ENCODE measurements at regions of chr2 and their contacts with region 1.

Region 1: DNA sequence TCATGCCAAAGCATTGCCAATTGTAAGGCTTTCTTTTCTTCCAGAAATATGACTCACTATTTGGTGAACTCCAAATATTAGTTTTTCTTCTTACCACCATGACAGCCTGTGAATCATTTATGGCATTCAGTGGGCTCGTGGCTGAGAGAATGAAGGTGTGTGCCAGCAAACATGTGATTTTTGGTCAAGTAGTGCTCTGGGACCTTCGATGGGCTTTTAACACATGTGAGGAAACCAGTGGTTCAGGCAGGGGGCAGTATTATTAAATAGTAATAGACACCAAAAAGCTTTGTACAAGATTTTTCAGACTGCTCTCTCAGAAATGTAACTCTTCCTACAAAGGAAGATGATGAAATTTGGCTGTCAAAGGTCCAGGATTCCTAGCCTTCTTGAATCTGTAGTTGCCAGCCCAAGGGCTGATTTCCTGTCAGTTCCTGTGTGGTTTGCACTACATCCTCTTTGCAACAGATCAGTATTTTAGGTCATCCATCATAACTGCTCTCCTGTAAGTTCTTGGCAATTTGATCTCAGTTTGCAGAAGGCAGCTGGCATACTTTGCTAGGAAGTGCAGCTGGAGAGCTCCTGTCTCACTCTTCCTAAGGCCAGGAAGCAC is 64.3 kb downstream of the BABAM2 start:
- DNase-seq: peak in 4 of 5 donors; percentile 47 to 55 (median 50)
- ATAC-seq: peak; percentile 79 to 90 (median 84)
- H3K4me3 ChIP-seq: no peak overlapping the region
- H3K27ac ChIP-seq: peak overlapping the region; percentile 12 to 90 (median 58)
- H3K4me1 ChIP-seq: peaks cover 3 to 83% (median 38%) of the 10 kb centered on the region in 12 donors
- H3K27me3 ChIP-seq: no peaks in the 10 kb centered on the region
- CTCF ChIP-seq: peak in 10 of 12 donors; percentile 15 to 54 (median 46)
- POLR2A ChIP-seq: no peak

Region 2: DNA sequence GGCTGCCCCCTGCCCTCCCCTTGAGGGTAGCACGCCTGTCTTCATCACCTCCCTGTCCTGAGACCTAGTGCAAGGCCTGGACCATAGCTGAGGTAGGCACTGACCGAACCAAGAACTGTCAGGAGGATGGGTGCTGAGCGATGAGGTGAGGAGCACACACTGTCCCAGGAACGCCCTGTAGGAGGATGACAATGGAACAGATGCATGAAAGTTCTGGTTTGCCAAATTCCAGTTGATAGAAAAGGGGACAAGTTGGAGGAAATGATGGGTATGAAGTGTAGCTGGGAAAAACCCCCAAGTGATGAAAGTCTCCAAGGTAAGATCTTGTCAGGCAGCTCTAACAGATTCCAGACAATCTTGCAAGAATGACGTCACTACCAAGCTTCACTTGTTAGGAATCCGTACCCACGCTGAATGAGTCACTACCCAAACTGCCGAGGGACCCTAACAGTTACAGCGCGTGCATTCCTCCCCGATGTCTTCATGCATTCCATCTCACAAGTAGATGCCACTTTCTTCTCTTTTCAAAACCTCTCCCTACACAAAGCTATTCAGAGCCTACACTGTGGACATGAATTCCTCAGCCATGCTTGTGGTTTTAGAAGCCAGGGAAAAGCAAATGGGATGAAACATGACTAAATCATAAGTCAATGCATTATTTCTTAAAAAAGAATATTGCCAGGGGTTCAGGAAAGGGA is 155.8 kb before region 1 on chr2:
- intact Hi-C with region 1: no loop called
- DNase-seq: peak in 4 of 5 donors; percentile 38 to 84 (median 56)
- ATAC-seq: peak; percentile 30 to 72 (median 56)
- H3K4me3 ChIP-seq: no peak overlapping the region
- H3K27ac ChIP-seq: peak overlapping the region; percentile 43 to 98 (median 88)
- H3K4me1 ChIP-seq: peaks cover 5 to 64% (median 48%) of the 10 kb centered on the region in 12 donors
- H3K27me3 ChIP-seq: no peaks in the 10 kb centered on the region
- CTCF ChIP-seq: no peak
- POLR2A ChIP-seq: no peak

Region 3: DNA sequence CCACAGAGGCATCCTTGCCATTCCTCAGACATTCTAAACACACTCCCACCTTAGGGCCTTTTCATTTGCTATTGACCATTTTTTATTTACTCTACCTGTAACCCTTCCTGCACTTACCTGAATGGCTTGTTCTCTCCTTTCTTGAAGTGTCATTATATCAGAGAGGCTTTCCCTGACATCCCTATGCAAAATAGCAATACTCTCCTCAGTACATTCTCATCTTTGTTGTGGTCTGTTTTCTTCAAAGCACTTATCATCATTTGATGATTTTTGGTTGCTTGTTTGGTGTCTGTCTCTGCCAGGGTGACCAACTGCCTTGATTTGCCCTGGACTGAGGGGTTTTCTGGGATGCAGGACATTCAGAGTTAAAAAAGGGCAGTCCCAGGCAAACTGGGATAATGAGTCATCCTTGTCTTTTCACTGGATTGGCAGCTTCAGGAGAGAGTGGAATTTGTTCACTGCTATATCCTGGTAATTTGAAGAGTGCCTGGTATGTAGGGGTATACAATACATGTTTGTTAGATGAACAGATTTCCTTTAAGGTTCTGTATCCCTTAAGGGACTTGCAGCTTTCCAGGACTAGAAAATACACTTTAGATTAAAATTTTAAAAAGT is 38.0 kb after region 1 on chr2:
- intact Hi-C with region 1: loop called in 2 of 10 experiments (anchors 5 kb)
- DNase-seq: no peak
- ATAC-seq: peak in 3 of 4 donors; percentile 48 to 67 (median 63)
- H3K4me3 ChIP-seq: no peak overlapping the region
- H3K27ac ChIP-seq: peak overlapping the region in 1 of 12 donors; percentile 9
- H3K4me1 ChIP-seq: peaks cover 0 to 37% (median 20%) of the 10 kb centered on the region in 12 donors
- H3K27me3 ChIP-seq: no peaks in the 10 kb centered on the region
- CTCF ChIP-seq: no peak
- POLR2A ChIP-seq: no peak

Region 4: DNA sequence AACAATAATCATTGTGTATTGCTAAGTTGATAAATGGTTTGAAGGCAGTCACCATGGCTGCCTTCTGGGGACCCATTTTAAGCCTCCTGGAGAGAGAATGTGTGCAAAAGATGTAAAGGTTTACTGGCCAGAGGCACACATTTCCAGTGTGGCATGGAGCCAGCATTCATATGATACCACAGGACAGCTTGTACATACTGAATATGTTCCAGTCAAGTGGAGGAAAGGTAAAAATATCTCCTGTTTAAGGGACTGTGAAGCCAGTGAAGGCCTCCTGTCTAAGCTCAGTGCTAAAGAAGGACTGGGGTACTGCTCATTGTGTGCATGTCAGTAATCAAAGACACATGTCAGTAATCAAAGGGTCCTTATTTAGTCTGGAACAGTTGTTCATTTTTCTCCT is 54.9 kb after region 1 on chr2:
- intact Hi-C with region 1: no loop called
- DNase-seq: peak in 3 of 5 donors; percentile 27 to 49 (median 33)
- ATAC-seq: peak; percentile 81 to 94 (median 88)
- H3K4me3 ChIP-seq: no peak overlapping the region
- H3K27ac ChIP-seq: peak overlapping the region in 1 of 12 donors; percentile 42
- H3K4me1 ChIP-seq: peaks cover 0 to 42% (median 12%) of the 10 kb centered on the region in 12 donors
- H3K27me3 ChIP-seq: no peaks in the 10 kb centered on the region
- CTCF ChIP-seq: no peak
- POLR2A ChIP-seq: no peak

Region 5: DNA sequence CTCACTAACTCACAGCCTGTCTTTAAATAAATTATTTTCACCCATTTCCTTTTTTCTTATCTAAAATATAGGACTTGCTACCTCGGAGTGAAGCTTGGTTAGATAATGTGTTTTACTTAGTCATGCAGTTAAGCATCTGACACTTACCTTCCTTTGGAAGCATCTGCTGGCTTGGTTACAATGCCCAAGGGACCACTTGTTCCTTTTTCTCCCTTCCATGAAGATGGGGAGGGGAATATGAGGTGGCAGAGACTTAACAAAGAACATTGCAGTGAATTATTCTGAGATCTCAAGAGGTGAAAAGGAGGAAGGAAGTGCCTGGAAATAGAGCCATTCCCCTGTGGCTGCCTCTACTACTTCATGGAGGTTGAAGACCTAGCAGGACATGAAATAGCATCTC is 292.4 kb after region 1 on chr2:
- intact Hi-C with region 1: loop called in 1 of 10 experiments (anchors 5 kb)
- DNase-seq: no peak
- ATAC-seq: peak in 2 of 4 donors; percentile 36 to 75
- H3K4me3 ChIP-seq: no peak overlapping the region
- H3K27ac ChIP-seq: peak overlapping the region in 6 of 12 donors; percentile 10 to 50 (median 24)
- H3K4me1 ChIP-seq: peaks cover 0 to 16% (median 12%) of the 10 kb centered on the region in 12 donors
- H3K27me3 ChIP-seq: no peaks in the 10 kb centered on the region
- CTCF ChIP-seq: no peak
- POLR2A ChIP-seq: no peak

Region 6: DNA sequence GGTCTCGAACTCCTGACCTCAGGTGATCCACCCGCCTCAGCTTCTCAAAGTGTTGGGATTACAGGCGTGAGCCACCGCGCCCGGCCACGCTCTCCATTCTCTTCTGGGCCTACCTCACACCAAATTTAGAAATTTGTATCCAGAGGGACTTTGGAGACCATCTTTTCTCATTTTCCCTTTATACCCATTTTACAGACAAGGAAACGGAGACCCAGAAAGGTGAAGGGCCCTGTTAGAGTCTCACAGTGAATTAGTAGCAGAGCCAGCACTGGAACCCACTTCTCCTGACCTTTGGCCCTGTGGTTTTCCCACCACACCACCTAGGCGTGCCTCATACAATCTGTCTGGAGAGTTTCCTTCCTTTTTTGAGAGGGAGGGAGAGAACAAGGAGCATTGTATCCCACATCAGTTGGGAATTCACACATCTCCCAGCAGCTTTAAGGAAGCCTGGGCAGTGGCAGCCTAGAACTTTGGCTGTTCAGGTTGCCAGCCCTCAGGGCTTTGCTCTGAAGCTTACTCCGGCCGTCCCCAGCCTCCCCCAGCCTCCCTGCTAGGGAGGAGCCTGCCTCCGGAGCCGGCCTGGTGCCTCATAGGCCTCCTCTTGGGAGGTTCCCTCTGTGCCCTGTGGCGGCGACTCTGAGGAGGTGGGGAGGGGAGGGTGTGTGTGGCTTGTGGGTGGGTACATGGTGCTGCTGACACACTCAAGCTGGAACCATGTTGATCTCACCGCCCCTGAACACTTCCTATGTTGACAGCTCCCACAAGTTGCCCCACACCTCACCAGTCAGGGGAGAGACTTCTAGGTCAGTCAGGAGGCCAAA is 451.6 kb after region 1 on chr2:
- intact Hi-C with region 1: loop called in 1 of 10 experiments (anchors 10 kb)
- DNase-seq: peak in 4 of 5 donors; percentile 48 to 80 (median 57)
- ATAC-seq: peak in 3 of 4 donors; percentile 23 to 64 (median 27)
- H3K4me3 ChIP-seq: peak overlapping the region in 1 of 12 donors; percentile 12
- H3K27ac ChIP-seq: peak overlapping the region in 9 of 12 donors; percentile 7 to 87 (median 28)
- H3K4me1 ChIP-seq: peaks cover 0 to 98% (median 40%) of the 10 kb centered on the region in 12 donors
- H3K27me3 ChIP-seq: no peaks in the 10 kb centered on the region
- CTCF ChIP-seq: no peak
- POLR2A ChIP-seq: no peak

Measured in heart left ventricle (tissue), 16 donors.